Sigmoid colon (tissue), 7 donors: ENCODE measurements at regions of chr5 and their contacts with region 1.

Region 1: GRCh38 chr5:122156724-122157325 is 27.5 kb downstream of the ZNF474 start:
- DNase-seq: no peak
- H3K4me3 ChIP-seq: no peak overlapping the region
- H3K27ac ChIP-seq: no peak overlapping the region
- H3K4me1 ChIP-seq: peaks cover 0 to 34% (median 32%) of the 10 kb centered on the region in 4 donors
- H3K27me3 ChIP-seq: no peaks in the 10 kb centered on the region
- CTCF ChIP-seq: peak in 3 of 4 experiments; percentile 25 to 43 (median 26)
- EP300 ChIP-seq: no peak
- POLR2A ChIP-seq: no peak

Region 2: DNA sequence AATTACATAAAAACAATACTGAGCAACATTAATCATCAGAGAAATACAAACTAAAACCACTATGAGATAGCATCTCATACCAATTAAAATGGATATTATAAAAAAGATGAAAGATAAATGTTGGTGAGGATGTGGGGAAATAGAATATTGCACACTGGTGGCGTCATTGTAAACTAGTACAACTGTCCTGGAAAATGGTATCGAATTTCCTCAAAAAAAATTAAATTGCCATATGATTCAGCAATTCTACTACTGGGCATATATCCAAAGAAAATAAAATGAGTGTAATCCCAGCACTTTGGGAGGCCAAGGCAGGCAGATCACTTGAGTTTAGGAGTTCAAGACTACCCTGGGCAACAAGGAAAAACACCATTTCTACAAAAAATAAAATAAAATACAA is 631.1 kb before region 1 on chr5:
- intact Hi-C with region 1: no loop called
- DNase-seq: no peak
- H3K4me3 ChIP-seq: no peak overlapping the region
- H3K27ac ChIP-seq: no peak overlapping the region
- H3K4me1 ChIP-seq: no peaks in the 10 kb centered on the region
- H3K27me3 ChIP-seq: no peaks in the 10 kb centered on the region
- CTCF ChIP-seq: no peak
- EP300 ChIP-seq: no peak
- POLR2A ChIP-seq: no peak

Region 3: DNA sequence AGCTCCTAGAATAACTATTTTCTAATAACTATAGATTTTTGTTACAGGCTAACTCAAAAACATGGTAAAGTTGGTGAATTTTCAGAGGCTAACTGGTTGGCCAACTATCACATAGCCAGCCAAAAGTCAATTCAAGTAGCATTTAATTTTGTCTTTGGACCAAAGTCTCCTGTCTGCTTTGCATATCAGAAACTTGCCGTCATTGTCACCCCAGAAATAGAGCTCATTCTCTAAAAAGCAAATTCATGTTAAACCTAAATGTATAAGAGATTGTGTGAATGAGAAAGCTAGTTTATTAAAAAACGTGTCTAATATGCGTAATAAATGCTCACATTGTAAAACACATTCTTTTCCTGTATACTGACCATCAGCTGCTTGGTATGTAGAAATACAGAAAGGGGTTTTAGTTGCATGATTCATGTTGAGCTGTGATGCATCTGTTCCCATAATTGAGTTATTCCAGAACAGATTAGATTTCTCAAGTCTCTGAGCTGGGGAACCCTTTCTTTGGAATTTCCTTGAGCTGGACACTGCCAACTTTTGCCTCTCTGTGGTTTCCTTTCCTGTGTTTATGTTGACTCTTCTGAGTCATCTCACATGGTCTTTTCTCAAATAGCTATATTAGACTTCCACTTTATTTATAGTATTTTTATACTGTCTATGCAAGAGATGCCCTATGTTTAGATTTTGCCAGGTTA is 187.8 kb before region 1 on chr5:
- intact Hi-C with region 1: loop called (anchors 10 kb)
- DNase-seq: no peak
- H3K4me3 ChIP-seq: no peak overlapping the region
- H3K27ac ChIP-seq: peak overlapping the region; percentile 44 to 70 (median 56)
- H3K4me1 ChIP-seq: peaks cover 0 to 36% (median 25%) of the 10 kb centered on the region in 4 donors
- H3K27me3 ChIP-seq: no peaks in the 10 kb centered on the region
- CTCF ChIP-seq: no peak
- EP300 ChIP-seq: peak in 1 of 4 donors; percentile 10
- POLR2A ChIP-seq: no peak

Region 4: GRCh38 chr5:122091936-122092600 is 64.8 kb before region 1 on chr5:
- intact Hi-C with region 1: loop called (anchors 1 kb)
- DNase-seq: no peak
- H3K4me3 ChIP-seq: no peak overlapping the region
- H3K27ac ChIP-seq: no peak overlapping the region
- H3K4me1 ChIP-seq: peaks cover 0 to 30% (median 14%) of the 10 kb centered on the region in 4 donors
- H3K27me3 ChIP-seq: no peaks in the 10 kb centered on the region
- CTCF ChIP-seq: peak in 3 of 4 experiments; percentile 38 to 55 (median 51)
- EP300 ChIP-seq: no peak
- POLR2A ChIP-seq: no peak